Dendritic cell treated with granulocyte-macrophage colony-stimulating factor and Interleukin-4, amounts not matched to agents 40 ng/mL and 50 ng/mL, for 4 days (primary cell): ENCODE measurements at regions of chr19 and their contacts with region 1.

Region 1: DNA sequence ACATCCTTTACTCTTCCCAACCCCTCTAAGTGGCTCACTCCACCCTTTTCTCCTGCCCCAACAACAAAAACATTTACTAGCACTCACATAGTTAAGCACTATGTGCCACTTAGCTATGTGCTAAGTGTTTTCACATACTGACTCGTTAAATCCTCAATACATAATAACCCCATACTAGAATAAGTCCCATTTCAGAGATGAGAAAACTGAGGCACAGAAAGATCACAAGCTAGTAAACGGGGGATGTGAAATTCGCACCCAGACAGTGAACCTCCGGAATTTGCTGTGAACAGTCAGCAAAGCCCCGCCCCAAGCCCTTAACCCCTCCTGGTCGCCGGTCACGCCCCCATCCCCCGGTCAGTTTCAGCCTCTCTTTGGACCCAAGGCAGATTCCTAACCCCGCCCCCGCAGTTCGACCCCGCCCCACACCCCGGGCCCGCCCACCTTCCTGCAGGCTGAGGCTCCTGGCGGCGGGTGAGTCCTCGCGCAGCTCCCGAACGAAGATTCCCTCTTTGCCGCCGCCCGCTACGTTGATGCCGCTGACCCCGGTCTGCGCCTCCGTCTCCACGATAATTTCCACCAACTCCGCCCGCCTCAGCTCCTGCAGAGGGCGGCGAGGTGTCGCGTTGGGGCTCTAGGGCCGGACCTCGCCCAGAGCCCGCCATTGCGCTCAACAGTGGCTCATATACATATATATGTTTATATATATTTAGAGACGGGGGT is 9.8 kb downstream of the PRX start:
- H3K4me3 Mint-ChIP-seq: peak overlapping the region; percentile 86
- H3K27ac Mint-ChIP-seq: peak overlapping the region; percentile 80
- H3K4me1 Mint-ChIP-seq: peaks cover 56% of the 10 kb centered on the region
- H3K27me3 Mint-ChIP-seq: peaks cover 6% of the 10 kb centered on the region

Region 2: DNA sequence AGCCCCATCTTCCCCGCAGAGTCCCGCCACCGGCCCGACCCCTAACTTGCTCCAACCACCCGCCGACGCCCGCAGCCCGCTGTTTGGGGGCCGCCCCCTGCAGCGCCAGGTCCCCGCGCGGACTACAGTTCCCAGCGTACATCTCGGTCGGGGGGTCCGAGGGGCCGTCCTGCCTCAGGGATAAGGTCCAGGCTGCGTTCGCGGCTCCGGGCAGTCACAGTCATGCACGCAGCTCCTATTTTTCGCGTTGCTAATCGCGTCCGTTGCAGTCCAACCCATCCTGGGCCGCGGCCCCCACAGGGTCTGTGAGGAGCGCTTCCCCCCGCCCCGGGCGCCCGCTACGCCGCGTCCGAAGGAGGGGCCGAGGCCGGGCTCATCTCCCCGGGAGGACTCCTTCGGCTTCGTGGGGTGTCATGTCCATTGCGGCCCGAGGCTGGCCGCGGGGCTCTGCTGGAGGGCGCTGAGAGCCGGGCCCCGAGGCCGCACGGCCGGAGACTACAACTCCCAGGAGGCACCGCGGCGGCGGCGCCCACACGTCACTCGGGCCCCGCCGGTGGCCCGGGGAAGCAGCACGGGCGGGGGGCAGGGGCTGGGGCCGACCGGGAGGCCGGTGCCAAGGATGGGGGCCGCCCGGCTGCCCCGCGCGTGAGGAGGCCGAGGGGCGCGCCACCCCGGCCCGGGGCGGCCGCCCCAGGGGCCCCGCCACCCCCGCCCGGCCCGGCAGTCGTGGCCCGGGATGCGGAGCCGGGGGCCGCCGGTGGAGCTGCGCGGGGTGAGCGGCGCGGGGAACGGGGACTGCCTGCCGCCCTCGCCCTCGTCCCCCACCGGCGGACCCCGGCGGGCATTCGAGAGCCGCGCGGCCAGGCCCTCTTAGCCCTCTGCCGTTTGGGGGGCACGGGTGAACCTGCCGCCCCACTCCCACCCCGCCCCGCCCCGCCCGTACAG is 212.3 kb before region 1 on chr19 and contains the start of gene MAP3K10:
- intact Hi-C with region 1: no loop called
- H3K4me3 Mint-ChIP-seq: peak within 1 kb of the TSS; percentile 83
- H3K27ac Mint-ChIP-seq: peak within 1 kb of the TSS; percentile 81
- H3K4me1 Mint-ChIP-seq: peaks cover 31% of the 10 kb centered on the region
- H3K27me3 Mint-ChIP-seq: peaks cover 12% of the 10 kb centered on the region

Region 3: GRCh38 chr19:40348125-40348913 is 55.1 kb before region 1 on chr19 and contains the starts of genes C19orf47 and PLD3:
- intact Hi-C with region 1: loop called (anchors 10 kb)
- H3K4me3 Mint-ChIP-seq: peak within 1 kb of the TSS; percentile 89
- H3K27ac Mint-ChIP-seq: peak within 1 kb of the TSS; percentile 87
- H3K4me1 Mint-ChIP-seq: peaks cover 47% of the 10 kb centered on the region
- H3K27me3 Mint-ChIP-seq: no peaks in the 10 kb centered on the region

Region 4: DNA sequence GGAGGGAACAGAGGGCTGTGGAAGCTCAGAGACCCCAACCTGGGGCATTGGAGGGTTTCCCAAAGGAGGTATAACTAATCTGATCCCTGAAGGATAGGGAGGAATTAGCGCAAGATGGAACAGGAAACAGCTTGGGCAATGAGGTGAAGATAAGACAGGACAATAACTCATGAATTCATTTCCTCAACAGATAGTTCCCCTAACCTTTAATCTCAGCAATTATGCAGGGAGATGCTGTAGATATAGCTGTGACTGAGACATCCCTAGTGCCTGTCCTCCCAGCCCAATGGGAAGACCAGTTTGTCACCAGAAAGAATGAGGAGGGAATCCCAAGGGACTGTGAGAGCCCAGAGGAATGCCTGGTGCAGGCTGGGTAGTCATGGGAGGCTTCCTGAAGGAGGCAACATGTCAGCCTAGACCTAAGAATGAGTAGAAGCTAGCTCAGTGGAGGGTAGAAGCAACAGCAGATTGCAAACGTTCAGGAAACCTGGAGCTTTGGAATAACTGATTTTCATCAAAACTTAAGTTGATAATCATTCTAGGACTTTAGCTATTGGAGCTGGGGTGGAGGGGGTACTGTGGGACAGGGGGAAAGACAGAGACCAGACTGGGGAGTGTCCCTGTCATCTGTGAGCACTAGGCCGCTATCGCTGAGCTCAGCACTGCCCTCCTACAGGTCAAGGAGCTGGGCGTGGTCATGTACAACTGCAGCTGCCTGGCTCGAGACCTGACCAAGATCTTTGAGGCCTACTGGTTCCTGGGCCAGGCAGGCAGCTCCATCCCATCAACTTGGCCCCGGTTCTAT is 32.2 kb before region 1 on chr19:
- intact Hi-C with region 1: no loop called
- H3K4me3 Mint-ChIP-seq: no peak overlapping the region
- H3K27ac Mint-ChIP-seq: no peak overlapping the region
- H3K4me1 Mint-ChIP-seq: peaks cover 64% of the 10 kb centered on the region
- H3K27me3 Mint-ChIP-seq: no peaks in the 10 kb centered on the region